ENCODE measurements at regions of chr1 and their contacts with region 1.

Region 1: DNA sequence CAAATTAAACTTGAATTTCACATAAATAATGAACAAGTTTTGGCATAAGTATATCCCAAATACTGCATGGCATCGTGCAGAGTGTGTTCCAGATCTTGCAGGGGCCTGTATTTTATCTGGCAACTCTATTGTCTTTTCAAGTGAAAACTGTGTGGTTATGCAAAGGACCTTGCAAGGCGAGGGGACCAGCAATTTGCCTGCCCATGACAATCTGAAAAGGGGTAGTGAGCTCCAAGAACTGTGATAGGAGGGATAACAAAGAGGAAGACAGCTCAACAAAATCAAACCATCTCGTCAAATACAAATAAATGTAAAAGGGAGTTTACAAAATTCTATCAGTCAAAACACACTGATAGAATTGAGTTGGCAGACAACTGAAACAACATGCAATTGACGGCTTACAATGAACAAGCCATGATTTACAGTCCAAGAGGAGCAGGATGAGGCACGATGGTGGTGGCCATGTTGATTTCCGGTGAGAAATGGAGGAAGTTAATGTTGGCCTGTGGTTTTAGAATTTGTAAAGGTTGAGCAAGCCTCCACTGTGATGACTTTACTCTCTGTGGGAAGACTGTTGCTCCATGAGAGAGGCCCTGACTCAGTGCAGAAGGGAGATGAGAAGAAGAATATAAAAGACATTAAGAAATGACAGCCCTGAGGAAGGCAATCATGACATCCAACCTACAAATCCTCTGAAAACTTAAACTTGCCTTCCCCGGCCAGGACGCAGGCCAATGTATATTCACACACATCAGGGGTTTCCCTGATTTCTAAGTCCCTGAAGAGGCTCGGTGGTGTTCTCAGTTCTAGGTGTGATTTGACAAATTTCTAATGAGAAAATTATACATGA is 132.2 kb downstream of the ADSS2 start:
- DNase-seq: peak in 1 of 7 donors; percentile 16
- H3K4me3 ChIP-seq: no peak overlapping the region
- H3K27ac ChIP-seq: peak overlapping the region in 1 of 5 donors; percentile 39
- H3K4me1 ChIP-seq: peaks cover 9 to 16% of the 10 kb centered on the region in 2 donors
- H3K27me3 ChIP-seq: no peaks in the 10 kb centered on the region
- CTCF ChIP-seq: no peak
- POLR2A ChIP-seq: no peak

Region 2: DNA sequence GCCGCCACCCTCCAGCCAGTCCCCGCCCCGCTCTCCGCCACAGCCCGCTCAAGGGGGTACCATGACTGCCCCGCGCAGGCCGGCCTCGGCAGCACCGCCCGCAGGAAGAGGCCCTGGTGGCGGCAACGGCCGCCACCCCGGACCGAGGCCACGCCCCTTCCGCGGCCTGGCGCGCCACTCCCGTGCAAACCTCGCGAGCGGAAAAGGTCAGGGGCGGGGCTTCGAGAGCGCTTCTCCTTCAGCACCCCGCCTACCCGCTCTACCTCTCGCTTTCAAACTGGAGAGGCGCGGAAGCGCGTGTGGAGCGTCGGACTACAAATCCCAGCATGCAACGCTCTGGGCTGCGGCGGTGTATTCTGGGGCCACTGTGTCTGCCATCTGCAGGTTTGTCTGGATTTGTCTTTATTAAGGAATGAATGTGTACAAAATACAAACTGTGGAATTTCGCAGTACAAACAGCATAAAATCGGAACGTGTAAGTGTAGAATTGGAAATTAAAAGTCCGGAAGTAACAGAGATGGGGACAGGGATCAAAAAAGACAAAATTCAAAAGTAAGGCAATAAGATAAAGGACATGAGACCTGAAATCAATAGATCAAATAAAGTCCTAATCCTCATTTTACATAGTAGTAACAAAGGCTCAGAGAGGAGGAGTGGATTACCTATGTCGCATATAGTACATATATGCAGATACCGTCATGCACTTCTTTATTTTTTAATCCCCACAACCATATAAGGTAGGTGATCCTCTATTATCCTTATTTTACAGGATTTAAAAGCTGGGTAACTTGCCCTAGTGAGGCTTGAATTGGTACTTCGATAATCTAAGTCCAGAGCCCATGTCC is 132.7 kb after region 1 on chr1:
- intact Hi-C with region 1: loop called in 1 of 2 experiments (anchors 5 kb)
- DNase-seq: peak; percentile 99 to 100 (median 99)
- H3K4me3 ChIP-seq: peak overlapping the region in 2 of 4 donors; percentile 88 to 90
- H3K27ac ChIP-seq: peak overlapping the region; percentile 95 to 98 (median 96)
- H3K4me1 ChIP-seq: peaks cover 0 to 39% of the 10 kb centered on the region in 2 donors
- H3K27me3 ChIP-seq: no peaks in the 10 kb centered on the region
- CTCF ChIP-seq: peak in 5 of 6 experiments; percentile 39 to 55 (median 44)
- POLR2A ChIP-seq: peak in 1 of 2 donors; percentile 54

Region 3: GRCh38 chr1:244552340-244552739 is 232.8 kb after region 1 on chr1:
- intact Hi-C with region 1: no loop called
- DNase-seq: no peak
- H3K4me3 ChIP-seq: no peak overlapping the region
- H3K27ac ChIP-seq: no peak overlapping the region
- H3K4me1 ChIP-seq: no peaks in the 10 kb centered on the region
- H3K27me3 ChIP-seq: no peaks in the 10 kb centered on the region
- CTCF ChIP-seq: no peak
- POLR2A ChIP-seq: no peak

Measured in adrenal gland (tissue), 19 donors.